AG04450 (cell line): ENCODE measurements at regions of chr17 and their contacts with region 1.

Region 1: GRCh38 chr17:49180303-49180702 is 30.1 kb downstream of the GNGT2 start:
- DNase-seq: no peak
- H3K4me3 ChIP-seq: no peak overlapping the region
- H3K27ac ChIP-seq: no peak overlapping the region
- H3K27me3 ChIP-seq: peaks cover 6% of the 10 kb centered on the region
- CTCF ChIP-seq: peak; percentile 82

Region 2: DNA sequence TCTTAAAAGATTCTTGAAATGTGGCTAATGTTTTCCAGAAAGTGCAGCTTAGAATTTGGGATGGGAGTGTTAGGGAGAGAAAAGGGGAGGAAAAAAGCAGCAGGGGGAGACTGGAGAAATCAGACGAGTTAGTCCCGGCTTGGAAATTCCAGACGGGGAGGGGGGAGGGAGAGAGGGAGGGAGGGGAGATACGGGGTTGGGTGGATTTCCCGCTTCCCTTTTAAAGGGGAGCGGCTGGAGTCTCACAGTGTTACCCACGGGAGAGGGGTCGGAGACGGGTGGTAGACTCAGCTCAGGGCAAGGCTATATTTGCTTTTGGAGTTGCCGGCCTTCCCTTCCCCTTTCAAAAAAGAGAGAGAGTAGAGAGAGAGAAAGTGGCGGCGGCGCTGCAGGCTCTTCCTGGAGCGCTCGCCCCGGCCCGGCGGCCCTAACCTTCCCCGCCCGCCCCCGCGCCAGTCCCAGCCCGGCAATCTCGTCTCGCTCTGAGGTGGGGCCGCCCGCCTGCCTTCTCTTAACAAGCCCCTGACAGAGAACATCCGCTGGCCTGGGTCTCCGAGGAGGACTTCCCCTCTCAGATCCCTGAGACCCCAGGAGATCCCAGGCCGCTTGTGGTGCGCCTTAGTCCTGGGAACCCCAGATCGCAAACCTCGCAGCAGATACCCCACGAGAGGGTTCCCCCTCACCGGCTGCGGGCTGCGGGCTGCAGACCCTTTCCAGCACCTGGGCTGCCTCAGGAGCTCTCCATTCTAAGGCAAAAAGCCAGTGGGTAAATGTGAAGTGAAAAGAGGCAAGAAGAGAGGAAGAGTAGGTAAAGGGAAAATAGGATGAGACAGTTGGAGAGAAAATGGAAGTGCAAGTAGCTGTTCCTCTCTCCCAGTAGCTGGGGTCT is 176.4 kb before region 1 on chr17:
- CTCF ChIA-PET with region 1: no interaction called
- POLR2A ChIA-PET with region 1: no interaction called
- DNase-seq: no peak
- H3K4me3 ChIP-seq: peak overlapping the region; percentile 64
- H3K27ac ChIP-seq: peak overlapping the region; percentile 23
- H3K27me3 ChIP-seq: no peaks in the 10 kb centered on the region
- CTCF ChIP-seq: no peak

Region 3: GRCh38 chr17:49121696-49122292 is 58.5 kb before region 1 on chr17:
- CTCF ChIA-PET with region 1: interaction called, 11 read pairs
- POLR2A ChIA-PET with region 1: no interaction called
- DNase-seq: no peak
- H3K4me3 ChIP-seq: no peak overlapping the region
- H3K27ac ChIP-seq: no peak overlapping the region
- H3K27me3 ChIP-seq: peaks cover 13% of the 10 kb centered on the region
- CTCF ChIP-seq: no peak

Region 4: DNA sequence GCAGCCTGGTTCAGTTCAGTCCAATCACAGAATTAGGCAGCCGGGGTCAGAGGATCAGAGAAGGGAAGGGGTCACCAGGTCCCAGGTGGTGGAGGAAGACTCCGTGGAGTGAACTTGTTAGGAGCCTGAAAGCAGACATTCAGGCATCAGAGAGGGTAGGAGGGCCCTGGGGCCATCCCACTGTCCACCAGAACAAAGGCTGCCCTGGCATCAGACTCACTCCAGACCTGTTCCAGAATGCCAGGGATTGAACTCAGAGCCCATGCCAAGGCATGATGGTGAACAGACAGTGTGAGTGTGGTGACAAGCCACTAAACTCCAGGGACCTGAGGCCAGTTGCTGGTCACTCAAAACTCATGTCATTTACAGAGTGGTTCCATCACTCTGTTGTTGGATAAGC is 10.1 kb before region 1 on chr17:
- CTCF ChIA-PET with region 1: interaction called, 10 read pairs
- POLR2A ChIA-PET with region 1: no interaction called
- DNase-seq: no peak
- H3K4me3 ChIP-seq: no peak overlapping the region
- H3K27ac ChIP-seq: no peak overlapping the region
- H3K27me3 ChIP-seq: peaks cover 38% of the 10 kb centered on the region
- CTCF ChIP-seq: no peak

Region 5: DNA sequence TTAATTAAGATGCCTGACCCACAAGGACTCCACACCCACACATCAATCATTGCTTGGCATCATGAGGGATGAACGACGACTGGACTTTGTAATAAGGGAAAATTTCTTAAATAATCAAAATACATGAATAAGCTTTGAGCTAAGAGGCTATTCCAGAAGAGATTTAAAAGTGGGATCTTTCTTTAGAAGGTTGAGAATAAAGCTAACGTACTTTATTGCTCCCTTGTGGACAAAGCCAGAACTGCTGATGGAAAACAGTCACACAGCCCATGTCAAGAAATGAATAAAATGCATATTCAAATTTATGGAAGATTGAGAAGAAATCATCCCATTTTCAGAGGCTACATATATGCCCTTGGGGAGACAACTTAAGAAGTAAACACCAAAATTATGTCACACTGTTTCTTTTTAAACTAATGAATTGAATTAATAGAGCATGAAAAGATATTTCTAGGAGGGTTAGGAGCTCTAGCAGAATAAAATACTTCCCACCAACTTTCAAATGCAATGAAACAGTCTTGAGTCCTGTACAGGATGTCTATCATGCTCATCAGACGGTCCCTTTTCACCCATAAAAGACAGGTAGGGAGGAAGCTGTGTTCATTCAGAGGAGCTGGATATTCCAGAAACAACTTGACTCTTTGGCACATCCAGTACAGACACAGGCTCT is 110.5 kb after region 1 on chr17:
- CTCF ChIA-PET with region 1: interaction called, 22 read pairs
- POLR2A ChIA-PET with region 1: no interaction called
- DNase-seq: no peak
- H3K4me3 ChIP-seq: no peak overlapping the region
- H3K27ac ChIP-seq: no peak overlapping the region
- H3K27me3 ChIP-seq: no peaks in the 10 kb centered on the region
- CTCF ChIP-seq: peak; percentile 79